Ascending aorta (tissue), 2 donors: ENCODE measurements at regions of chrX and their contacts with region 1.

Region 1: DNA sequence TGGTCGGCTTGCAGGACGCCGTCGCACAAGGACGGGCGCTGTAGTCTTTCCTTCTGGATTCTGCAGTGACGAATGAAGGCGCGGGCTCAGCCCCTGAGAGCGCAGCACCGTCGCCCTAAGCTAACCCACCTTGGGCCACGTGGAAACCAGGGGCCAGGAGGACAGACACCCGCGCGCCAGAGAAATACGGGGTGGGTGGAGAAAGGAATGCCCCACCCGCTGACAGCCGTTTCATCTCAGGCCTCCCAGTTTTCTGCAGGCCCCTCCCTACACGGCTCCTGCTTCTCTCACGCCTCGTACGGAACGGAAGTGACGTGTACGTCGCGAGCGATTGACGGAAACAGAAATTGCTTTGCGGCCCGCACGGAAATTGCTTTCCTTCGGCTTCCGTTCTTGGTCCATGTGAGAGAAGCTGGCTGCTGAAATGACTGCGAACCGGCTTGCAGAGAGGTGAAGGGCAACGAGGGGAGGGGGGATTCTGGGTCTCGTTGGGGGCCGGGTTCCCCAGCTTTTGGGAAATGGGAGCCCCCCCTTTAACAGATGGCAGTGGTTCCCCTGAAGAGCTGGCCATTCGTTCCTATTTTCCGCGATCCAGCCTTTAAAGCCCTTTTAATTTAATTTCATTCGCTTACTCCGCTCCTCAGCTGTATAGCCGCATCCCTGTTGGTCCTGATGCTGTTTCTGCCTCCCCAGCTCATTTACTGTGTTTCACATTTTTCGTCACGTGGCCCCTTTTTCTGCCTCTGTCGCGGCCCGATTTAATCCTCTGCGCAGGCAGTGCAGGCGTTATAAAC is at the start of gene UTP14A:
- DNase-seq: peak; percentile 58 to 92
- H3K4me3 ChIP-seq: peak within 1 kb of the TSS; percentile 62 to 68
- H3K27ac ChIP-seq: peak within 1 kb of the TSS; percentile 57 to 81
- H3K4me1 ChIP-seq: no peaks in the 10 kb centered on the region
- H3K27me3 ChIP-seq: no peaks in the 10 kb centered on the region
- CTCF ChIP-seq: no peak
- total RNA-seq, gene UTP14A: 1.1 TPM

Region 2: DNA sequence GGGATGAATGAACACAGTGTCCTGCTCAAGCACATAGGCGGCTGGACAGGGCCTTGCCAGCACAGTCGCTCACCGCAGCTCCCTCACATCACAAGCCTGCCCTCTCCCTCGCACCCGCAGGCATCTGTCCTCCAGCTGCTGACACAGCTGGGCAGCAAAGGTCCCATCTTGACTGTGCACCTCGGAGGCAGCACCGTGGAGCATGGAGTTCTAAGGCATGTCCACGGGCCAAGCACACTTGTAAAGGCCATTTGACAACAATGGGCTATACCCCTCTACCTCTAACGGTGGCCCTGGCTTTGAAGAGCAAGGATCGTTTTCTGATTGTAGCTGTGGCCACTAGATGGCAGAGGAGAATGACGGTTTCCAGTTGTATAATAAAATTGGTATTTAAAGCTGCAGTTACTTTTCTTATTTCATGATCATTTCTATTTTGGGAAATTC is 305.0 kb before region 1 on chrX:
- intact Hi-C with region 1: loop called (anchors 5 kb)
- DNase-seq: no peak
- H3K4me3 ChIP-seq: no peak overlapping the region
- H3K27ac ChIP-seq: peak overlapping the region; percentile 57 to 72
- H3K4me1 ChIP-seq: no peaks in the 10 kb centered on the region
- H3K27me3 ChIP-seq: no peaks in the 10 kb centered on the region
- CTCF ChIP-seq: peak; percentile 26 to 62 (median 62)

Region 3: DNA sequence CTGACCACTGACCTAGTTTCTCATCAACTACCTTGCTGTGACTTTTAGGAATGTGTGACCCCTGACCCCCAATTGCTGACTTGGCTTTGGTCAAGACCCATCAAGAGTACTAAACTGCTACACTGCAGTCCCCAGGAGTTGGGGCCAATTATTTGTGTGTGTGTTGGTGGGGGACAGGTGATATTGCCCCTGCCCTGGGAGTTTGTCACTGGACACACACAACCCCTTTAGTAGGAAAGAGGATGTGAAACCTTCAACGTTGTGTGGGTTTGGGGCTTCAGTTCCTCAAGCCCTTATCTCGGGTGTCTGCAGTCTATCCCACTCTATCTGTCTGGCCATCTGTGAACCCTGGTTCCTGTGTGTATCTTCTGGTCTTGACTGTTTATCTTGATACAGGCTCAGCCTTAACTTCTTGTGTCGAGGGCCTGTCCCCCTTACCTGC is 119.8 kb before region 1 on chrX:
- intact Hi-C with region 1: no loop called
- DNase-seq: no peak
- H3K4me3 ChIP-seq: no peak overlapping the region
- H3K27ac ChIP-seq: no peak overlapping the region
- H3K4me1 ChIP-seq: no peaks in the 10 kb centered on the region
- H3K27me3 ChIP-seq: no peaks in the 10 kb centered on the region
- CTCF ChIP-seq: no peak

Region 4: DNA sequence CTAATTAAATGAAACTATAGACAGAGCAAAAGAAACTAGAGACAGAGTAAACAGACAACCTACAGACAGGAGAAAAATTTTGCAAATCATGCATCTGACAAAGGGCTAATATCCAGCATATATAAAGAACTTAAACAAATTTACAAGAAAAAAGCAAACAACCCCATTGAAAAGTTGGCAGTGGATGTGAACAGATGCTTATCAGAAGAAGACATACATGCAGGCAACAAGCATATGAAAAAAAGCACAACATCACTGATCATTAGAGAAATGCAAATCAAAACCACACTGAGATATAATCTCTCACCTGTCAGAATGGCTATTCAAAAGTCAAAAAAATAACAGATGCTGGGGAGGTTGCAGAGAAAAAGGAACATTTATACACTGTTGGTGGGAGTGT is 347.9 kb after region 1 on chrX:
- intact Hi-C with region 1: no loop called
- DNase-seq: no peak
- H3K4me3 ChIP-seq: no peak overlapping the region
- H3K27ac ChIP-seq: no peak overlapping the region
- H3K4me1 ChIP-seq: no peaks in the 10 kb centered on the region
- H3K27me3 ChIP-seq: no peaks in the 10 kb centered on the region
- CTCF ChIP-seq: no peak

Region 5: DNA sequence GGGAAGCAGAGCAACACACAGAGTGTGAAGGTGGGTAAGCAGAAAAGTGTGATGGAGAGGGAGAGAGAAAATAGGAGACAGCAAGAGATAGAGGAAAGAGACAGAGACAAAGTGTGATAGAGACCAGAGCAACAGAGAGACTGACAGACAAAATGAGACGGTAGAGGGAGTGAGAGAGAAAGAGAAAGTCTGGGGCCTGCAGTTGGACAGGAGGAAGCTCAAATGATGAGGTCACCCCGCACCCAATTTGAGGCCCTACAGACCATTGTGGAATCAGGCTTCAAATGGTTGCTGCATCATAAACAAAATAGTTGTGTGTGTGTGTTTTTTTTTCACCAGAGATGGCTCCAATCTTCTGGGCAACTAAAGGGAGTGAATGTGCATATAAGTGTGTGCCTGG is 1104.2 kb after region 1 on chrX:
- intact Hi-C with region 1: no loop called
- DNase-seq: no peak
- H3K4me3 ChIP-seq: no peak overlapping the region
- H3K27ac ChIP-seq: no peak overlapping the region
- H3K4me1 ChIP-seq: no peaks in the 10 kb centered on the region
- H3K27me3 ChIP-seq: no peaks in the 10 kb centered on the region
- CTCF ChIP-seq: no peak